ENCODE measurements at regions of chr17 and their contacts with region 1.

Region 1: DNA sequence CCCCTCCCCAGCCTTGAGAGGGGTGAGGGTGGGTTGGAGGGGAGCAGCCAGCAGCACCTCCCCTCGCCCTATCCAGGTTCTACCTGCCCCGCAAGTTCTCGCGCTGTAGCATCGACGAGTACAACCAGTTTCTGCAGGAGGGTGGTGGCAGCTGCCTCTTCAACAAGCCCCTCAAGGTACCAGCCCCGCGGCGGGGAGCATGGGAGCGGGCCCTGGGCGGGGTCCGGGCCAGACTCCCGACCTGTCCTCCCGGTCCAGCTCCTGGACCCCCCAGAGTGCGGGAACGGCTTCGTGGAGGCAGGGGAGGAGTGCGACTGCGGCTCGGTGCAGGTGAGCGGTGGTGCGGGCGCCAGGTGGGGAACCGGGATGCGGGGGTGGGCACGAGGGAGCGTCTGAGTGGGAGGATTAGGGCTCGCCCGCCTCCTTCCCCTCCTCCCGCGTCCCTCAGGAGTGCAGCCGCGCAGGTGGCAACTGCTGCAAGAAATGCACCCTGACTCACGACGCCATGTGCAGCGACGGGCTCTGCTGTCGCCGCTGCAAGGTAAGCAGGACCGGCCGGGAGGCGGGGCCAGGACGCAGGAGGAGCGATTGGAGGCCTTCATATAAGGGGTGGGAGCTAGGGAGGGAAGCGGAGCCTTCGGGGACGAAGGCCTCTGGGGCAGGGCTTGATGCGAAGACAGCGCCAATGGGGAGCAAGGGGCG is 16.5 kb downstream of the ADAM11 start:
- DNase-seq: peak in 3 of 4 donors; percentile 97 to 99 (median 98)
- ATAC-seq: peak; percentile 95
- H3K4me3 ChIP-seq: peak overlapping the region; percentile 4 to 17
- H3K27ac ChIP-seq: peak overlapping the region; percentile 5 to 55 (median 32)
- H3K4me1 ChIP-seq: peaks cover 33% of the 10 kb centered on the region
- H3K27me3 ChIP-seq: no peaks in the 10 kb centered on the region
- CTCF ChIP-seq: no peak
- POLR2A ChIP-seq: no peak

Region 2: DNA sequence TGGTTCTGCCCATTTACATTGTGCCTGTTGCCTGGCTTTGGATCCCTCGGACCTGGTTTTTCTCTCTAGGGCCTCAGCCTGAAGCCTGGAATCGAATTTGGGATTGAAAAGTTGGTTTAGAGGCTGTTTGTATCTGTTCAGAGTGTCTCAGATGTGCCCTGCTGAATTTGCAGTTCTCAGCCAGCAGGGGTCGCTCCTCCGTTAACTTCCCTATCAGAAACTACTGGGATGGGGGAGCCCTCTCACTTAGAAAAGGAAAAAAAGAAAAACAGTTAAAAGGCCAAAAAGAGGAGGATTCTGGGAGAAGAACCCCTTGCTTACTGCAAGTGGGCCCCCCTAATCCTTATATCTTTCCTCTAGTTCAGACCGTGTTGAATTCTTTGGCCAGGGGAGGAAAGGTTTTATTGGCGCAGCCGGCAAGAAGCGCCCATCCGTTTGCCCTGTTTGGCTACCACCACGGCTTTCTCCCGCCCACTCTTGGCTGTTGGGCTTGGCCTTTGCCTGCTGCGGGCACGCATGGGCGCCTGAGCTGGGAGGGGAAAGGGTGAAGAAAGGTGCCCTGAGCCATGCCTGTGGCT is 209.3 kb before region 1 on chr17:
- intact Hi-C with region 1: no loop called
- DNase-seq: no peak
- ATAC-seq: no peak
- H3K4me3 ChIP-seq: no peak overlapping the region
- H3K27ac ChIP-seq: no peak overlapping the region
- H3K4me1 ChIP-seq: no peaks in the 10 kb centered on the region
- H3K27me3 ChIP-seq: no peaks in the 10 kb centered on the region
- CTCF ChIP-seq: no peak
- POLR2A ChIP-seq: no peak

Region 3: DNA sequence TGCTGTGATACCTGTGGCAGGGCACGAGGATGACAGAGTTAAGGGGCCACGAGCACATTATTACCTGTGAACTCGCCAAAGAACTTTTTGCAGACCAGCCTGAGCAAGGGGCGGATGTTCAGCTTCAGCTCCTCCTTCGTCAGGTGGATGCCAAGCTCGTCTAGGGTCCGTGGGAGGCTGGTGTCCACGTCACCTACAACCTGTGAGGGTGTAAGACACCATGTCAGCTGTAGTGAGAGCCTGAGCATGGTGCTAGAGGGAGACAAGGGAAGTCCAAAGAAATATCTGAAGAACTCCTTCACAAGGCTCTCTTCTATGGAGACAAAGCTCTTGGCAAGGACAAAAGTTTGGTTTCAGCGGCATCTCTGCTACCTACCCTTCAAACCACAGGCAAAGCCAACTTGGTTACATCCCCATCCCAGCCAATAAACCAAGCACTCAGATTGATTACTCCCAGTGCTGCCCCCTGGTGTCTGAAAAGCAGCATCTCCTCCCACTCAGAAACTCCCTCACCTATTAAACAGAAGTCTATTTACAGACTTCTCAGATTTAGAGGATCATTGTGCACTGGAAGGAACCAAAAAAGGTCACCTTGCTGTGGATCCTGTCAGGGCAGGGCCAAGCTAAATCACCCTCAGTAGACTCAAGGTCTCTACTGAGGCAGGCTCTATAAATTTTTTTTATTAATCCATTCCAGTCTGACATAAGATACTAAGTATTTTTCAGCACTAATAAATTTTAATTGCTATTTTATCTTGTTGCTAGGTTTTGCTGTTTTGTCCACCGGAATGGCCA is 89.8 kb after region 1 on chr17:
- intact Hi-C with region 1: loop called (anchors 5 kb)
- DNase-seq: peak; percentile 67 to 77 (median 70)
- ATAC-seq: peak; percentile 74
- H3K4me3 ChIP-seq: no peak overlapping the region
- H3K27ac ChIP-seq: no peak overlapping the region
- H3K4me1 ChIP-seq: no peaks in the 10 kb centered on the region
- H3K27me3 ChIP-seq: no peaks in the 10 kb centered on the region
- CTCF ChIP-seq: peak; percentile 76 to 84 (median 80)
- POLR2A ChIP-seq: no peak

Region 4: DNA sequence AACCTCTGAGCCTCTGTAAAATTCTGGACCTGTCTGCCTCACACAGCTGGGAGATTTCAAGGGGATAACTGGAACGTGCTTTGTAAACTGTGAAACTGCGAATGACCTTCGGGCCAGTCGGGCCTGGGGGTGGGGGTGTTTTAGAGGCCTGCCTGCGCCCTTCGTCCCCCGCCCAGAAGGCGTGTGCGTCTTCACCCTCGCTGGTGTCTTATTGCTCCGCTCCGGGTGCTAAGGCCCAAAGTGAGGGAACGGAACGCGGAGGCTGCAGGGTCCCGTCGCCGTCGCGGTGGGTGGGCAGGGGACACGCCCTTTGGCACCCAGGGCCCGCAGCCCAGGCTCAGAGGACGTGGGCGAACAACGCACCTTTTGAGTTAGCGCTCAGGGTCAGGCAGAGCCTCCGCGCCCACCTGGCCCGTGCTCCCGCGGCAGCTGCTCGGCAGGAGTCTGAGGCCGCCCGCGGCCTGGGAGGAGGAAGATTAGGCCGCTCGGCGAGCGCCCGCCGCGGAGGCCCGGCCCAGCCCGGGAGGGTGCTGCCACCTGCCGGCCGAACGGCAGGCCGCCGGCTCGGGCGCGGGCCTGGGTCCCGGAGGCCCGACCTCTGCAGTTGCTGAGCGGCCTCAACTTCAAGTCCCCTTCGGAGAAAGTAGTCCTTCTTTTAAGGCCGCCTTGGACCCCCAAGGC is 246.5 kb after region 1 on chr17:
- intact Hi-C with region 1: loop called (anchors 10 kb)
- DNase-seq: peak; percentile 67 to 75 (median 74)
- ATAC-seq: peak; percentile 80
- H3K4me3 ChIP-seq: no peak overlapping the region
- H3K27ac ChIP-seq: peak overlapping the region; percentile 20 to 84 (median 78)
- H3K4me1 ChIP-seq: peaks cover 50% of the 10 kb centered on the region
- H3K27me3 ChIP-seq: no peaks in the 10 kb centered on the region
- CTCF ChIP-seq: peak; percentile 51 to 97 (median 95)
- POLR2A ChIP-seq: peak; percentile 47 to 57 (median 54)

Region 5: DNA sequence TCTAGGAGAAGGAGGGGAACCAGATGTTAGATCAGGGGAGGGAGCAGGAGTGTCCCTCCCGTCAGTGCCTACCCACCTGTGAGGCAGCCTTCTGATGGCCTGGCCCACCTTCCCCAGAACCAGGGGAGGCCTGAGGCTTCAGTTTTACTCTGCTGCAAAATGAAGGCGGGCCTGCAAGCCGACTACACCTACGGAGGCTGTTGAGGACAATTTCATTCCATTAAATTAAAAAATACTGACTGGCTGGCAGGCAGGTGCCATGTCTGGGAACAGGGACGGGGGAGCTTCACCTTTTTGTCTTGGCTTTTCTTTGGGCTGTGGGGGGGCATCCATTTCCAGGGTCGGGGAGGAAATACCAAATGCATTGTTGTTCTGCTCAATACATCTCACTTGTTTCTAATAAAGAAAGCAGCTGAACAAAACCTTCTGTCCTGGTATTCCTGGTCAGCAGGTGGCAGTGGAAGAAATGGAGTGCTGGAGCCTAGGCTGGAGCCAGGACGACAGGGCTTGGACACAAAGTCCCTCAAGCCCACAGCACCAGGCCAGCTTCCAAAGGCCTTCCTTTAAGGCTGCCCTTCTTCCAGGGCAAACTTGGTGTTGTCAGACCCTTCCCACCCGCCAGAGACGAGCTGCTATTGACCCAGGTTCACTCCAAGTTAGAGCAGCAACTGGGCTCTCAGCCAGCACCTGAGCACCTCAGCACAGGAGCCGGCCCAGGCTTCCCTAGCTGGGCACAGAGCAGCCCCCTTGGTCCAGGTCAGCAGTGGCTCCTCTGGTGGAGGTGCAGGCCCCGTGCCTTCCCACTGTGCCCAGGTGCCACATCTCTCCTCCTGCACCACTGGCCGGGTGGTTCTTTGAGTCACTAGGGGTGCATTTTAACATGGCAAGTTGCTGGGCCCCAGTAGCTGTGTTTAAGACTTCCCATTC is 333.6 kb after region 1 on chr17:
- intact Hi-C with region 1: loop called (anchors 10 kb)
- DNase-seq: peak in 2 of 4 donors; percentile 26 to 28
- ATAC-seq: no peak
- H3K4me3 ChIP-seq: no peak overlapping the region
- H3K27ac ChIP-seq: no peak overlapping the region
- H3K4me1 ChIP-seq: no peaks in the 10 kb centered on the region
- H3K27me3 ChIP-seq: no peaks in the 10 kb centered on the region
- CTCF ChIP-seq: peak in 1 of 7 experiments; percentile 17
- POLR2A ChIP-seq: no peak